ENCODE measurements at regions of chr16 and their contacts with region 1.

Region 1: DNA sequence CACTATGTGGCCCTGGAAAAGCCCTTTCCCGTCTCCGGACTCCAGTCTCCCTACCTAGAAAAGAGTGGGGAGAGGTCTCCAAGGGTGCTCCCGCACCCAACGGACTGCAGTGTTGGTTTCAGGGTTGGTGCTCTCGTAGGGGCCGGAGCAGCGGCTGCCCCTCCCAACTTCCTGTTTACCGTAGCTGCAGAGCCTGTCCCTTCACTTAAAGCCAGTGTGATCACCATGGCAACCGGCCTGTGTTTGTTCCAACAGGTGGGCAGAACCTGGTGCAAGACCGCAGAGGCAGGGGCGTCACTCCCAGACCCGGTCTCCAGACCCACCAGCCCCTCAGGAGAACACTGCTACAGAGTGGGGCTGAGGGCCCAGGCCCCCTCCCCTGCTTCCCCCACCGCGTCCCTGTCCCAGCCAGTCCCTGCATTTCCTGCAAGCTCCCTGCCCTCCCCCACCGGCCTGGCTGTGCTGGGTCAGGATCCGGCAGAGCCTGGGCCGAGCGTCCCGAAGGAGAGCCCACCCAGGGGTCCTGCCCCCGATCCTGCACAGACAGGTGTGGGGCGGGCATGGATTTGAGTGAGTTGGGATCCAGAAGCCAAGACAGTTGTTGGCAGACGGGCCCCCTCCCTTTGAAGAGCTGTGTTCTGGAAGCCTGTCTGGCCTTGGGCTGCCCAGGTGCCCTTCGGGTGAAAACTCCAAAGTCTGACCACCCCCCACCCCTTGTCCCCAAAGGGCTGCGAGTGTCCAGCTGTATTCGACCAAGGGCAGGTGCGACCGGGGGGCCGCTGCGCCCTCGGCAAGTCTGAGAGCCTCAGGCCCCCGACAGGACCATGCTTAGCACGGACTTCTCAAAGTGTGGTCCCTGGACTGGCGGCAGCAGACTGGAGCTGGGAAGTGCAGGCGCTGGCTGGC is 1.5 kb upstream of the BAIAP3 start:
- DNase-seq: no peak
- H3K4me3 ChIP-seq: peak overlapping the region; percentile 18 to 35
- H3K27ac ChIP-seq: no peak overlapping the region
- H3K4me1 ChIP-seq: peaks cover 29% of the 10 kb centered on the region
- H3K27me3 ChIP-seq: peaks cover 11% of the 10 kb centered on the region
- CTCF ChIP-seq: no peak
- POLR2A ChIP-seq: no peak

Region 2: GRCh38 chr16:1564325-1564724 is 232.4 kb after region 1 on chr16:
- intact Hi-C with region 1: no loop called
- DNase-seq: no peak
- H3K4me3 ChIP-seq: no peak overlapping the region
- H3K27ac ChIP-seq: no peak overlapping the region
- H3K4me1 ChIP-seq: peaks cover 6% of the 10 kb centered on the region
- H3K27me3 ChIP-seq: no peaks in the 10 kb centered on the region
- CTCF ChIP-seq: no peak
- POLR2A ChIP-seq: no peak

Region 3: GRCh38 chr16:1579201-1579600 is 247.2 kb after region 1 on chr16:
- intact Hi-C with region 1: loop called (anchors 5 kb)
- DNase-seq: no peak
- H3K4me3 ChIP-seq: no peak overlapping the region
- H3K27ac ChIP-seq: no peak overlapping the region
- H3K4me1 ChIP-seq: no peaks in the 10 kb centered on the region
- H3K27me3 ChIP-seq: no peaks in the 10 kb centered on the region
- CTCF ChIP-seq: no peak
- POLR2A ChIP-seq: no peak